Posterior vena cava (tissue), 2 donors: ENCODE measurements at regions of chr2 and their contacts with region 1.

Region 1: DNA sequence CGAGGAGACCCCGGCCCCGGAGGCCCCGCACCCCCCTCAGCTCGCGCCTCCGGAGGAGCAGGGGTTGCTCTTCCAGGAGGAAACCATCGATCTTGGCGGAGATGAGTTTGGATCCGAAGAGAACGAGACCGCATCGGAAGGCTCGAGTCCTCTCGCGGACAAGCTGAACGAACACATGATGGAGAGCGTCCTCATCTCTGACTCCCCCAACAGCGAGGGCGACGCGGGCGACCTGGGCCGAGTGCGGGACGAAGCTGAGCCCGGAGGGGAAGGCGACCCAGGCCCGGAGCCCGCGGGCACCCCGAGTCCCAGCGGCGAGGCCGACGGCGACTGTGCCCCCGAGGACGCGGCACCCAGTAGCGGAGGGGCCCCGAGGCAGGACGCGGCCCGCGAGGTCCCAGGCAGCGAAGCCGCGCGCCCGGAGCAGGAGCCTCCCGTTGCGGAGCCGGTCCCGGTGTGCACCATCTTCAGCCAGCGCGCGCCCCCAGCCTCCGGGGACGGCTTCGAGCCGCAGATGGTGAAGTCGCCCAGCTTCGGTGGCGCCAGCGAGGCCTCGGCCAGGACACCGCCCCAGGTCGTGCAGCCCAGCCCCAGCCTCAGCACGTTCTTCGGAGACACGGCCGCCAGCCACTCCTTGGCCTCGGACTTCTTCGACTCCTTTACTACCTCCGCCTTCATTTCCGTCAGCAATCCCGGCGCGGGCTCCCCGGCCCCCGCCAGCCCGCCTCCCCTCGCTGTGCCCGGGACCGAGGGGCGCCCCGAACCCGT is 8.3 kb downstream of the TRAPPC12 start:
- DNase-seq: peak; percentile 70

Region 2: DNA sequence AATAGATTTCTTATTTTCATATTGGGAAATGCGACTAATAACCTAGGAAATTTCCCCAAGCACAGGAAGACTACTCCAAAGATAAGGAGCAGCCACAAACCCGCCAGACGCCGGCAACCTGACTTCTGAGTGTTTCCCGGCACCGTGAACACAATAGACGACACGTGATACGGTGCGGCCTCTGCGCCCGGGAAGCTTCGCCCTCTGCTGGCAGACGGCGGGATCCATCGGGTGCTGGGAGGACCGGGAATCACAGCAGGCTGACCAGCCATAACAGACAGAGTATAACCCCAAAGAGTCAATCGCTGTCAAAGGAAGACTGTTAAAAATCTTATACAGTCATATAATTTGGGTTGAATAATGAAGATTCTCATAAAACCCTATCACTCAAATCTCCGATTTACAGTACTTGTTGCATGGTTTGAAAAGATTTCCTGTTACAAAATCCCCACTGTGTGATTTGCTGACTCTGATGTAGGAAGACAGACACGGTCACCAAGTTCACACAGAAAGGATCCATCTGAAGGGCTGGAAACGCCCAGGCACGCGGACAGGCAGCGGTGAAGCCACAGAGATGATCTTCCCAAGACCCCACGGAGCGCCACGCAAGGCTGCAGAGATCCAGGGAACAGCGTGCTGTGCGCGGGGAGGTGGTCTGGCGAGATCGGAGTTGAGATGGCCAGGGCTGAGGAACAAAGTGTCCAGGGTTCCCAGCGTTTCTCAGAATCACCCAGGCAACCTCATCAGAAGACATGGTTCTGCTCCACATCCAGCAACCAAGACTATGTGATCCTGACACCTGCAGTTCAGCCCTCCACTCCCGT is 84.0 kb before region 1 on chr2:
- intact Hi-C with region 1: no loop called
- DNase-seq: peak; percentile 96

Region 3: GRCh38 chr2:3409627-3410170 is 21.9 kb after region 1 on chr2:
- intact Hi-C with region 1: loop called in 1 of 2 experiments (anchors 1 kb)
- DNase-seq: no peak

Region 4: GRCh38 chr2:3493615-3494007 is 105.8 kb after region 1 on chr2:
- intact Hi-C with region 1: no loop called
- DNase-seq: no peak